ENCODE measurements at regions of chr3 and their contacts with region 1.

Region 1: GRCh38 chr3:127672516-127673190 is at the start of gene ABTB1:
- DNase-seq: peak; percentile 92
- H3K4me3 ChIP-seq: peak within 1 kb of the TSS; percentile 81 to 100 (median 90)
- H3K27ac ChIP-seq: peak within 1 kb of the TSS; percentile 89 to 93 (median 92)
- H3K4me1 ChIP-seq: peaks cover 0 to 34% (median 27%) of the 10 kb centered on the region in 4 donors
- H3K27me3 ChIP-seq: no peaks in the 10 kb centered on the region
- CTCF ChIP-seq: no peak
- EP300 ChIP-seq: no peak
- POLR2A ChIP-seq: no peak
- total RNA-seq, gene ABTB1: 33.5 to 75.3 (median 49.1) TPM

Region 2: GRCh38 chr3:127598841-127599570 is 73.6 kb before region 1 on chr3:
- intact Hi-C with region 1: loop called (anchors 5 kb)
- DNase-seq: no peak
- H3K4me3 ChIP-seq: peak overlapping the region in 3 of 4 donors; percentile 53 to 63 (median 60)
- H3K27ac ChIP-seq: peak overlapping the region; percentile 59 to 79 (median 69)
- H3K4me1 ChIP-seq: peaks cover 0 to 16% (median 11%) of the 10 kb centered on the region in 4 donors
- H3K27me3 ChIP-seq: no peaks in the 10 kb centered on the region
- CTCF ChIP-seq: no peak
- EP300 ChIP-seq: no peak
- POLR2A ChIP-seq: no peak

Region 3: DNA sequence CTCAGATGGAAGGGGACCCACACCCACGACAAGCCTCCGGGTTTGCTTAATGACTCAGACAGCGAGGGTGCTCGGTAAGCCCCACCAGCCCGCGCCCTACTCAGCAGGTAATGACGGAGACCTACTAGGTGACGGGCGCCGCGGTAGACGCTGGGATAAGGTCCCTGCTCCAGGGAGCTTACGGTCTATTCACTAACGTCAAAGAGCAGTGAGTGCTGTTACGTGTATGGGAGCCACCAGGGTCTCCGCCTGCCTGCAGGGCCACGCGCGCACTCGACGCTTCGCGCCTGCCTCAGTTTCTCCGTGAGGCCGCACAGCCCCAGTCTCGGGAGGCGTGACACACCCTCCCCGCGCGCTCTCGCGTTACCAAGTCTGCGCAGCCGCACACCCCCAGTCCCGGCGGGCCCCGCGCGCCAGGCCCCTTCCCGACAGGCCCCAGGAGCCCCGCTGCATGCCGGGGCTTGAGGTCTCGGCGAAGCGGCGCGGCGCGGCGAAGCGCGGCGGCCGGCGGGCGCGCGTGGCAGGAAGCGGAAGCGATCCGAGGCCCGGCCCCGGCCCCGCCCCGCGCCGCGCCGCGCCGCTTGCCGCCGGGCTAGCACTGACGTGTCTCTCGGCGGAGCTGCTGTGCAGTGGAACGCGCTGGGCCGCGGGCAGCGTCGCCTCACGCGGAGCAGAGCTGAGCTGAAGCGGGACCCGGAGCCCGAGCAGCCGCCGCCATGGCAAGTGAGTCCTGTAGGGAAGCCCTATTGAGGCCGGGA is 379.4 kb after region 1 on chr3 and contains the start of gene SEC61A1:
- intact Hi-C with region 1: loop called (anchors 5 kb)
- DNase-seq: peak; percentile 96
- H3K4me3 ChIP-seq: peak within 1 kb of the TSS; percentile 82 to 99 (median 98)
- H3K27ac ChIP-seq: peak within 1 kb of the TSS; percentile 94 to 97 (median 94)
- H3K4me1 ChIP-seq: peaks cover 0 to 45% (median 33%) of the 10 kb centered on the region in 4 donors
- H3K27me3 ChIP-seq: no peaks in the 10 kb centered on the region
- CTCF ChIP-seq: no peak
- EP300 ChIP-seq: peak in 1 of 4 donors; percentile 29
- POLR2A ChIP-seq: peak; percentile 38 to 60
- total RNA-seq, gene SEC61A1: 52.3 to 82.5 (median 63.0) TPM

Measured in sigmoid colon (tissue), 7 donors.